ENCODE measurements at regions of chr2 and their contacts with region 1.

Region 1: DNA sequence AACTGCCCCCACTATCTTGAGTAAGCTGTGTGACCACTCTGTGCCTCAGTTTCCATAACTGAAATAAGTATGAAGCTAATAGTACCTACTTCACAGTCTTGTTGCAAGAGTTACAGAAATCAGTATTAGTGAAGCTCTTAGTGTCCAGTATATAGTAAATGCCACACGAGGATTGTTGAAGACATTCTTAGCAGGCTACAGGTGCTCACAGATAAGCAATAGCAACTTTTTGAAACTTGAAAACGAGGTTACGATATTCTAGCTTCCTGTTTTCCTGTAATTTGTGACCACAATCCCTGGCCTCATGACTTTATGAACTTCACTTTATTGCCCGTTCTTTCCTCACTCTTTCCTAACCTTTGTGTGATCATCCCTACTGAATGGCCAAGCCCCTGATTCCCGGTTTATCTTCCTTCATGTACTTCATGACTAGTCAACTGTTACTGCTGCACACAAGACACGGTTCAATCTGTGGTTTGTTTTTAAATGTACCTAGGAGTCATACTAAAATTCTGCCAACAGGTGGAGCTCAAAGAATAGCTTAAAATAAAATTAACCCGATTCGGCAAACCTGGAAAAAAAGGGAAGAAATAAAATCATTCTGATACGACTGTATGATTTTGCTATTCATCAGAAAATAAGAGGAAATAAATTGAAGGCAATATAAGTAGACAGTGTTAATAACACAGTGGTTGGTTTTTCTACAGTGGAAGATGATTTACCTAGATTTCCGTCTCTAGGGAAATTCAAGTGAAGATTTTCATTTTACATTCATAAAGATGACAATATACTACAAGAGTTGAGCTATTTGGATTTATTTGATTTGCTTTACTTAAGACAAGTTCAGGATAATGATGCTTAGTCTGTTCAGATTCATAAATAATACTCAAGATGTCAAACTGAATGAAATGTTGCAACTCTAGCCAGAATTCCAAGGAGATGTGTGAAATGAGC is 38.1 kb upstream of the STAT1 start:
- DNase-seq: no peak

Region 2: GRCh38 chr2:191150600-191151330 is 98.7 kb after region 1 on chr2 and contains the start of gene STAT4:
- intact Hi-C with region 1: loop called (anchors 2 kb)
- DNase-seq: peak in 9 of 10 donors; percentile 18 to 90 (median 44)

Measured in posterior cingulate gyrus (tissue), 11 donors.